HEK293 (cell line): ENCODE measurements at regions of chr10 and their contacts with region 1.

Region 1: GRCh38 chr10:103712570-103713498 is 142.5 kb downstream of the SH3PXD2A start:
- H3K4me3 ChIP-seq: no peak overlapping the region
- H3K27ac ChIP-seq: no peak overlapping the region
- H3K4me1 ChIP-seq: no peaks in the 10 kb centered on the region
- CTCF ChIP-seq: peak; percentile 73

Region 2: GRCh38 chr10:103598654-103599115 is 114.1 kb before region 1 on chr10:
- CTCF ChIA-PET with region 1: interaction called, 16 read pairs
- POLR2A ChIA-PET with region 1: no interaction called
- H3K4me3 ChIP-seq: no peak overlapping the region
- H3K27ac ChIP-seq: no peak overlapping the region
- H3K4me1 ChIP-seq: no peaks in the 10 kb centered on the region
- CTCF ChIP-seq: peak; percentile 90

Region 3: DNA sequence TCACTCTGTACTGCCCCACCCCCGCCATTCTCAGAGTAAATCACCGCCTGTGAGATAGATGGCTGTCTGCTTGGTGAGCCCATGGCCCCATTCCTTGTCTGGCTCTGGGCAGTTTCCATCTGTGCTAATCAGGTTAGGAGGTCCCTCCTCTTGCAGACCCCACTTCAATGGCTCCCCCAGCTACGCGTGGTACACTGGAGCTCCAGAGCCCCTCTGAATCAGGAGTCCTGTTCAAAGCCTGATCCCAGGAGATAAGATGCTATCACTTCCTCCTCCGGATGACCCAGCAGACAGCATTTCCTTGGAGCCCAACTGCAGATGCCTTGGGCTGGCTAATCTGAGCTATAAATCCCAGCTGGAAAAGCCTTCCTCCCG is 20.2 kb after region 1 on chr10:
- CTCF ChIA-PET with region 1: interaction called, 16 read pairs
- POLR2A ChIA-PET with region 1: no interaction called
- H3K4me3 ChIP-seq: no peak overlapping the region
- H3K27ac ChIP-seq: no peak overlapping the region
- H3K4me1 ChIP-seq: no peaks in the 10 kb centered on the region
- CTCF ChIP-seq: no peak

Region 4: DNA sequence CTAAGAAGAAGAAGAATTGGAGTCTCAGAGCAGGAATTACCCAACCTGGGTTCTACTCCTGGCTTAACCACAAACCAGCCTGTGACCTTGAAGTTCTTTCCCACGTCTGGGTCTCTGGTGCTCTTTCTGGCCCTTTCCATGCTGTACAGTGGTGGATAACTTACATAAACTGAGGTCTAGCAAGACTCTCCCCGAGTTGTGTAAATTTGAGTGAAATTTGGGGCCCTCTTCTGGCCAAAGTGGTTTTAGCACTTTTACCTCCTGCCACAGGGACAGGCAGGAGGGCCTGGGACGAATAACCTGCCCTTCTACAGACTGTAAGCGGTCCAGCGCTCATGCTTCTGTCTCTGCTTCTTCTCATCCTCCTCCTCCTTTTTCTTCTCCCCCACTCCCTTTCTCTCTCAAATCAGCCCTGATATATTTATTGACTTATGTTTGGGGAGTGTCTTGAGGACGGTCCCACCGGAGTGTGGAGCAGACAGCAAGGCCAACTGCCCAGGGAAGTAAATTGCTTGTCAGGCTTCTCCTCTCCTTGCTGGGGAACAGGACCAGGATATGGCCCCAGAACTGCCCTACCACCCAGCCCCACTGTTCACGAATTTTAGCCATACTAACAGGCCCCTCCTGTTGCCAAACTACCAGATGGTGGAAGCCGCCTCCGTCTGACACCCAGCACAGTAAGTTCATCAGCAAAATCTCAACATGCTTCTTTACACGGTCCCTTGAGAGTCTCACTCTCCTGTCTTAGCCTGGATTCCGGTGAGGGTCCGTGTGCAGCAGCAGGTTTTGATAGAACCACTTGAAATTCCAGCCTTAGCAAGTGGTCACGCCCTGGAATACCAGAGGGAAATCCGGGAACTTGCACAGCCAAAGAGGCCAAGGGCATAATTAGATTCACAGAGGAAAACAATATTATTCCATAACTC is 146.6 kb after region 1 on chr10:
- CTCF ChIA-PET with region 1: interaction called, 90 read pairs
- POLR2A ChIA-PET with region 1: no interaction called
- H3K4me3 ChIP-seq: no peak overlapping the region
- H3K27ac ChIP-seq: no peak overlapping the region
- H3K4me1 ChIP-seq: peaks cover 3% of the 10 kb centered on the region; the same call in 1 of the 2 replicates
- CTCF ChIP-seq: peak; percentile 58; the same call in 1 of the 2 replicates

Region 5: GRCh38 chr10:103881416-103882284 is 168.8 kb after region 1 on chr10:
- CTCF ChIA-PET with region 1: interaction called, 151 read pairs
- POLR2A ChIA-PET with region 1: no interaction called
- H3K4me3 ChIP-seq: no peak overlapping the region
- H3K27ac ChIP-seq: no peak overlapping the region
- H3K4me1 ChIP-seq: no peaks in the 10 kb centered on the region
- CTCF ChIP-seq: no peak